HCT116 (cell line): ENCODE measurements at regions of chr14 and their contacts with region 1.

Region 1: GRCh38 chr14:73949744-73950734 is at the starts of genes COQ6 and FAM161B:
- DNase-seq: peak; percentile 97
- ATAC-seq: peak; percentile 93
- H3K4me3 ChIP-seq: peak within 1 kb of the TSS; percentile 61 to 81
- H3K27ac ChIP-seq: peak within 1 kb of the TSS; percentile 81
- H3K4me1 ChIP-seq: peaks cover 4 to 17% of the 10 kb centered on the region in 2 experiments; a peak in 2 of 4 replicates
- H3K27me3 ChIP-seq: no peaks in the 10 kb centered on the region
- CTCF ChIP-seq: no peak
- POLR2A ChIP-seq: no peak
- RAD21 ChIP-seq: no peak
- total RNA-seq, gene COQ6: 21.6 TPM
- total RNA-seq, gene FAM161B: 1.6 TPM

Region 2: DNA sequence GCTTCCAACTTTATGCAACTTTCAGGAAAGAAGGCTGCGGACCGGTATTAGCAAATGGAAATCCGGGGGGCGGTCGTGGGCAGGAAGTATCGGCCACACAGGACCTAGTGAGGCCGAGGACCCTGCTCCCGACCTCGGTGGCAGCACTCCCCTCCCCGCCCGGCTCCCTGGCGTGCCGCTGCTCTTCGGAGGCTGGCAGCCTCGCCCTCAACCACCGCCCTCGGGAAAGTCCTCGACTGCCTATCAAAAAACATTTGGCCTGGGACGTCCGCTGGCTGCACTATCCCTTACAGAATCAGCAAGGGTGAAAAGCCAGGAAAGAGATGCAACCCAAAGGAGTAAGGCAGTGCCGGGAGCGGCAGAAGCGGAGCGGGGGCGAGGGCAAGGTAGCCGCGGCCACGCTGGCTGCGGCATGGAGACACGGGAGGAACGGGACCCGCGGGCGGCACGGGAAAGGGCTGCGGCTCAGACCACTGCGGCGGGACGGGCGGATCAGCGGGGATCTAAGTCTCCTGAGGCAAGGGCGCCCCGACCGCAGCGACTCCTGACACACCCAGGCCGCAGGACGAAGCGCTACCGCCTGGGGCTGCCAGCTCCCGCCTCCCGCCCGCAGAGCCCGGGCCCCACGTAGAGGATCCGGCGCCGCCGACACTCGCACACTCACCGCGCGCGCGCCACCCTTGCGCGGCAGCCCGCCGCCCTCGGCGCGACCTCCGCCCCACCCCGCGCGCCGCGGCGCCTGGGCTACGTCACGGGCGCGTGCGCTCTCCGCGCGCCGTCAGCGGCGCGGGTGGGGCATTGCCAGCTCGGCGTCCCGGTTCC is 68.8 kb after region 1 on chr14 and contains the starts of genes BBOF1 and ENTPD5:
- CTCF ChIA-PET with region 1: no interaction called
- POLR2A ChIA-PET with region 1: interaction called, 3 read pairs
- RAD21 ChIA-PET with region 1: no interaction called
- intact Hi-C with region 1: loop called (anchors 5 kb)
- DNase-seq: peak; percentile 55
- ATAC-seq: peak; percentile 91
- H3K4me3 ChIP-seq: peak within 1 kb of the TSS; percentile 78 to 87
- H3K27ac ChIP-seq: peak within 1 kb of the TSS; percentile 94
- H3K4me1 ChIP-seq: peaks cover 17 to 34% of the 10 kb centered on the region in 2 experiments
- H3K27me3 ChIP-seq: no peaks in the 10 kb centered on the region
- CTCF ChIP-seq: no peak
- POLR2A ChIP-seq: peak; percentile 86
- RAD21 ChIP-seq: no peak
- total RNA-seq, gene BBOF1: 4.0 TPM
- total RNA-seq, gene ENTPD5: 14.4 TPM